BJ (cell line): ENCODE measurements at regions of chr2 and their contacts with region 1.

Region 1: GRCh38 chr2:120396886-120397811 is 51.2 kb downstream of the INHBB start:
- DNase-seq: peak; percentile 77
- H3K4me3 ChIP-seq: no peak overlapping the region
- H3K27me3 ChIP-seq: no peaks in the 10 kb centered on the region
- CTCF ChIP-seq: no peak

Region 2: DNA sequence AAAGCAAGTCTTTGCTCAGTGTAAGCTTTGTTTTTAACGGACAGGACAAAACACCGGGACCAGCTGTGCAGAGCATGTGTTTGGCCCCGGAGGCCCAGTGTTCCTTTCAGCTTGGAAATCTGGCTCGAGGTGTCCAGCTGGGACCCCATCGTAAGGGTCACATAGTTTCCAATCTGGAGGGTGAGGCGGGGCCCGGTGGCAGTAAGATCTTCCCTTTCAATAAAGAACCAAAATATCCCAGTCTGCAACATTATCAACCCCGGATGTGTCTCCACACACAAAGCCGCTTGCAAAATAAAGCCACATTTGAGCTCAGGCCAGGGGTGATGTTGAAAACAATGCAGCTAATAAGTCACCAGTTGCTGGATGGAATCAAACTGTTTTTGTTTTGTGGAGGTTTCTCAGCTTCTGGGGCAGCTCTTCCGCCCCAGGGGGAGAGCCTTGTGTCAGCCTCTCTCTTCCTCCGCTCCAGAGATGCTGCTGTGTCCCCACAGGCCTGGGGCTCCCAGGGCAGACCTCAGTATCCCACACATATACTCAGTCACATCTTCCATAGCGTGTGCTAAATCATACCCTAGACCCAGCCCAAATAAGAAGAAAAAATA is 199.9 kb after region 1 on chr2:
- CTCF ChIA-PET with region 1: no interaction called
- POLR2A ChIA-PET with region 1: interaction called, 11 read pairs
- DNase-seq: peak; percentile 77
- H3K4me3 ChIP-seq: no peak overlapping the region
- H3K27me3 ChIP-seq: no peaks in the 10 kb centered on the region
- CTCF ChIP-seq: no peak

Region 3: DNA sequence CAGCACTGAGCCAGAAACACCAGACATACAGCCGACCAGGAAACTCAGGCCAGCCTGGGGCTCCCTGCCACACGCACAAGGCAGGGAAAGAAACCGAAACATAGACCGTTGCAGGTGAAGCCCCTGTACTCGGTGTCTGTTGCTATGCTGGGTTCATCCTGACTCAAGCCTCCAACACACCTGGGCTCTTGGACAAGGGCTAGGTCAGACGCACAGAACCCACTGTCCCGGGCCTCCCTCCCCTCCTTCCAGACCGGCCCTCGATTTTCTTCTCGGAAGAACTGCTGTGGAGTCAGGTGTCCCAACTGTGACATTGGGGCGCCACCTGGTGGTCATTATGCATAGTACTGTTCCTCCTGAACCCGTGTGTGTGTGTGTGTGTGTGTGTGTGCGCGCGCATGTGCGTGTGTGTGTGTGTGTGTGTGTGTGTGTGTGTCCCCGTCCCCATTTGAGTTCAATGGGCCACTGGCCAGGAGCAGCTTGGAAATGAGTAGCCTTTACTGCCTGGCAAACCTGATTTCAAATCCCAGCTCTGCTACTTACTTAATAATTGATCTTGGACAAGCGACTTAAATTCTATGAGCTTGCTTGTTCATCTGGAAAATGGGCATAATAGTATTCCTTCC is 283.1 kb after region 1 on chr2:
- CTCF ChIA-PET with region 1: no interaction called
- POLR2A ChIA-PET with region 1: no interaction called
- DNase-seq: no peak
- H3K4me3 ChIP-seq: no peak overlapping the region
- H3K27me3 ChIP-seq: no peaks in the 10 kb centered on the region; the same call in 1 of the 2 replicates
- CTCF ChIP-seq: peak; percentile 66